Prostate gland (tissue), 2 donors: ENCODE measurements at regions of chr3 and their contacts with region 1.

Region 1: DNA sequence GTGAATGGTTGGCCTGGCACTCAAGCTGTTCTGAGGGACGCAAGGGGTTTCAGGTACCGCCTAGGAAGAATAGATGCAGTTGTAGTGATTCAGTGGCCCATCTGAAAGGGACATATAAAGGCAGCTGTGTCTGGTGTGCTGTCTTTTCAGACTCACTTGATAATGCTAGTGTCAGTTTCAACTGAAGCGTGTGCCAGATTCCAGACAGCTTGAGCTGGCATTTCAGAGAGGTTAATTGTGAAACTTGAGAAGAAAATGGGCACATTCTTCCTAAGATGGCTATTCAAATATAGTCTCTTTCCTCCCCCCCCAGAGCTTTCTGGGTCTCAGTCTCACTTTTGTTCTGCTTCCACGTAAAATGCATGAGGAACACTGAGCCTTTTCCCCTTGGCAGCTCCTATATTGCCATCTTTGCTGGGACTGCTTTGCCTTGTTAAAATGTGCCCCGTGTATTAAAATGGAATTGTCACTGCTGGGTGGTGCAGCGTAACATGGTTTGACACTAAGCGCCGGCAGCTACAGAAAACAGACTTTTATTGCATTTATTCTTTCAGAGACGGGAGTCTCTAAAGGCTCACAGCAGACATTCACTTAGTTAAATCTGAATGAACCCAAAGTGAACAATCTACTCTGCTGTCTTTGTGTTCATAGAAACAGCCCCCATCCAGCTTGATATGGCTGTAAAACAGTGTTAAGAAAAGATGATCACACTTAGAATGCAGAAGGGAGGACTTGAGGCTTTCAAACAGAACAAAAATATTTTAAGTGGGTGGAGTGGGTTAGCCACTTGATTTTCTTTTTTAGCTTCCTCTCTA is 478.7 kb downstream of the RBMS3 start:
- DNase-seq: peak; percentile 27
- H3K4me3 ChIP-seq: no peak overlapping the region
- H3K27ac ChIP-seq: peak overlapping the region; percentile 54 to 73
- H3K4me1 ChIP-seq: peaks cover 12% of the 10 kb centered on the region
- H3K27me3 ChIP-seq: no peaks in the 10 kb centered on the region
- CTCF ChIP-seq: no peak
- POLR2A ChIP-seq: no peak

Region 2: GRCh38 chr3:29642393-29643033 is 117.1 kb before region 1 on chr3:
- intact Hi-C with region 1: loop called (anchors 5 kb)
- DNase-seq: peak; percentile 71
- H3K4me3 ChIP-seq: no peak overlapping the region
- H3K27ac ChIP-seq: peak overlapping the region; percentile 43 to 50
- H3K4me1 ChIP-seq: peaks cover 2% of the 10 kb centered on the region
- H3K27me3 ChIP-seq: no peaks in the 10 kb centered on the region
- CTCF ChIP-seq: peak in 1 of 4 experiments; percentile 10
- POLR2A ChIP-seq: no peak

Region 3: GRCh38 chr3:29693863-29694262 is 65.8 kb before region 1 on chr3:
- intact Hi-C with region 1: loop called (anchors 10 kb)
- DNase-seq: no peak
- H3K4me3 ChIP-seq: no peak overlapping the region
- H3K27ac ChIP-seq: no peak overlapping the region
- H3K4me1 ChIP-seq: no peaks in the 10 kb centered on the region
- H3K27me3 ChIP-seq: no peaks in the 10 kb centered on the region
- CTCF ChIP-seq: no peak
- POLR2A ChIP-seq: no peak